Heart right ventricle (tissue), 16 donors: ENCODE measurements at regions of chr1 and their contacts with region 1.

Region 1: DNA sequence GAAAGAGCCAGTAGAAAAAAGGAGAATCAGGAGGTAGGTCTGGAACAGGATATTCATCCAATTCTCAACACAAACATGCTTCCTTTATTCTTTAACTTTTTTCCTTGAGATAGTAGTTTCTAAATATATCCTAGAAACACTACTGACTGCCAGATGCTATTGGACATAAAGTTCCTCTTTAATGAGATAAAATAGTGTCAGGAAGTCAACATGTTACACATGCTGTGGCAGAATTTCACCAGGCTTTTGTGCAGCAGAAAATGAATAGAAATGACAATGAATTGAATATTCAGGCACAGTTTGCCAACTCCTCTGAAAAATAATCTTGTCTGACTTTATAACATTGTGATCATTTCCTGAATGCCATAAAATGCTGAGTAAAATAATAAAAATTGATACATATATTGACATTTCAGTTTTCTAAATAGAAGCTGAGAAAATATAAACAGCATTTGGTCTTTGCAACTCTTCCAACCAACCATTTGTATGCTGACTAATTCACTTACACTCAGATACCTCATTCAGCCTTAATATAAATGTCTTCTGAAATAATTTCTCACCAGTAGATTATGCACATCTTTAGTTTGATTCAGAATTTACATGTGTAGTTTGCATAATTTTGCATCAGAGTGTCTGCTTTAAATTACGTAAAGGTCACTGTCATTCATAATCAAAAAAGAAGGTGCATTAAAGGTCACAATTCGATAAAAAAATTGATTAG is 486.1 kb upstream of the ADGRL2 start:
- DNase-seq: no peak
- ATAC-seq: peak in 4 of 8 donors; percentile 31 to 76 (median 60)
- H3K4me3 ChIP-seq: no peak overlapping the region
- H3K27ac ChIP-seq: peak overlapping the region in 8 of 10 donors; percentile 3 to 61 (median 28)
- H3K4me1 ChIP-seq: peaks cover 0 to 33% (median 14%) of the 10 kb centered on the region in 9 donors
- H3K27me3 ChIP-seq: no peaks in the 10 kb centered on the region
- CTCF ChIP-seq: no peak

Region 2: GRCh38 chr1:81270051-81270450 is 44.6 kb before region 1 on chr1:
- intact Hi-C with region 1: no loop called
- DNase-seq: no peak
- ATAC-seq: no peak
- H3K4me3 ChIP-seq: no peak overlapping the region
- H3K27ac ChIP-seq: no peak overlapping the region
- H3K4me1 ChIP-seq: no peaks in the 10 kb centered on the region
- H3K27me3 ChIP-seq: no peaks in the 10 kb centered on the region
- CTCF ChIP-seq: no peak

Region 3: DNA sequence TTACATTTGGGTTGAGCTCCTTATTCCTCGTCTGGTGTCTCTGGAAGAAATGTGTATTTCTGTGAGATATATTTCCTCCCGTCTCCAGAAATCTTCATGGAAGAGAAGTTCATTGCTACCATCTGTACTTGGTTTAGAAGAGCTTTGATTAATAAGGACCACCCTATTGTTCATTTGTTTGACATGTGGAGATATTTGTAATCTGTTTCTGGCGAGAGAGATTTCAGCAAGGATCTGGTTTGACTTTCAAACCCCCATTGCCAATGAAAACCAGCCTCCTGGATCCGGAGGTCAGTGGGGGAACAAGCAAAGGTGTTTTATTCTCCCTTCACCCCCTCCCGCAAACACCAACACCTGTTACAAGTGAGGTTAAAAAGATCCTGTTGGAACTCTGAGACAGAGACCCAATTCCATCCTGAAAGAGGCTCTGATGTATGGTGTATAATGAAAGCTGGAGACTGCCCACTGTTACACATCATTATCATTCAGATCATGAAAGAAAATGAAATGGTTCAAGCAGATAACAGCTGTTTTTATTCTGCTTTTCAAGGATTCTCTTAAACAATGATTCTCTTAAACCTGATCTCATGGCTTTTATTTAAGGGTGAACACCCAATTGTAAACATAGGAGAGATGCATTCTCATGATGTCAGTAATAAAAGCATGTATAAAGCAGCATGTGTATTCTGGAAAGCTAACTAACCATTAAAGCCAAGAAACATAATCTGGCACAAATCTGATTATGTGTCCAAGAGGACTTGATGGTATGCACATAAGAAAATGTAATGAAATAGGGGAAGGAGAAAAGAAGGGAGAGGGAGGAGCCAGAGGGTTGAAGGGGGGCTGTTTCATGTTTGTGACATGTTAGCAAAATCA is 92.6 kb after region 1 on chr1:
- intact Hi-C with region 1: loop called in 6 of 10 experiments (anchors 5 to 10 kb)
- DNase-seq: no peak
- ATAC-seq: no peak
- H3K4me3 ChIP-seq: no peak overlapping the region
- H3K27ac ChIP-seq: no peak overlapping the region
- H3K4me1 ChIP-seq: peaks cover 0 to 26% (median 10%) of the 10 kb centered on the region in 9 donors
- H3K27me3 ChIP-seq: no peaks in the 10 kb centered on the region
- CTCF ChIP-seq: no peak

Region 4: GRCh38 chr1:81478219-81478618 is 163.5 kb after region 1 on chr1:
- intact Hi-C with region 1: loop called in 1 of 10 experiments (anchors 10 kb)
- DNase-seq: peak; percentile 53 to 67
- ATAC-seq: peak; percentile 90 to 99 (median 97)
- H3K4me3 ChIP-seq: peak overlapping the region in 9 of 10 donors; percentile 2 to 44 (median 30)
- H3K27ac ChIP-seq: peak overlapping the region in 8 of 10 donors; percentile 22 to 49 (median 38)
- H3K4me1 ChIP-seq: peaks cover 0 to 17% (median 13%) of the 10 kb centered on the region in 9 donors
- H3K27me3 ChIP-seq: no peaks in the 10 kb centered on the region
- CTCF ChIP-seq: no peak